ENCODE measurements at regions of chr2 and their contacts with region 1.

Region 1: DNA sequence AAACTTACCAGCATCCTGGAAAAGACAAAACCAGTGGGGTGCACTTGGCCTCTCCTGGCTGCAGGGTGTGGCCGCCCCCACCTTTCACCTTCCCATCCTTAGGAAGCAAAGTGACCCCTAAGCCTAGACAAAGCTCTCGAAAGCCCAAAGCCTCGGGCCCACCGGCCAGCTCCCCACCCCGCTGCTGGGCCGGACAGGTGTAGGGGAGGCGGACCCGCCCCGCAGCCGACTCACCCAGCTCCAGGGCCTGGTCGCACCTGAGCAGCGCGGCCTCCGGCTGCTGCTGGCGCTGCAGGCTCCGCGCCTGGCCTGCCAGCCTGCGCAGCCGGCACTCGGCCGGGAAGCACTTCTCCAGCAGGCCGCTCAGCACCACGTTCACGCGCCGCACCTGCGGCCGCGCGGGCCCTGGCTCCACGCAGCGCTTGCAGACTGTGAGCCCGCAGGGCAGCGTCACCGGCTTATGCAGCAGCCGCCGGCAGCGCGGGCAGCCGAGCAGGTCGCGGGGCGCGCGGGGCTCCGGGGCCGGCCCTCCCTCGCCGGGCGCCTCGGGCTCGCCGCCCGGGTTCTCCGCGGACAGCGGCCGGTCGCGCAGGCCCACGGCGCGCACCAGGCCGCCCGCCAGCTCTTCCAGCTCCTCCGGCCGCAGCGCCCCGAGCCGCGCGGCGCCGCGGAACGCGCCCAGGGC is 978 bp downstream of the LONRF2 start:
- DNase-seq: peak in 39 of 42 donors; percentile 12 to 70 (median 42)

Region 2: DNA sequence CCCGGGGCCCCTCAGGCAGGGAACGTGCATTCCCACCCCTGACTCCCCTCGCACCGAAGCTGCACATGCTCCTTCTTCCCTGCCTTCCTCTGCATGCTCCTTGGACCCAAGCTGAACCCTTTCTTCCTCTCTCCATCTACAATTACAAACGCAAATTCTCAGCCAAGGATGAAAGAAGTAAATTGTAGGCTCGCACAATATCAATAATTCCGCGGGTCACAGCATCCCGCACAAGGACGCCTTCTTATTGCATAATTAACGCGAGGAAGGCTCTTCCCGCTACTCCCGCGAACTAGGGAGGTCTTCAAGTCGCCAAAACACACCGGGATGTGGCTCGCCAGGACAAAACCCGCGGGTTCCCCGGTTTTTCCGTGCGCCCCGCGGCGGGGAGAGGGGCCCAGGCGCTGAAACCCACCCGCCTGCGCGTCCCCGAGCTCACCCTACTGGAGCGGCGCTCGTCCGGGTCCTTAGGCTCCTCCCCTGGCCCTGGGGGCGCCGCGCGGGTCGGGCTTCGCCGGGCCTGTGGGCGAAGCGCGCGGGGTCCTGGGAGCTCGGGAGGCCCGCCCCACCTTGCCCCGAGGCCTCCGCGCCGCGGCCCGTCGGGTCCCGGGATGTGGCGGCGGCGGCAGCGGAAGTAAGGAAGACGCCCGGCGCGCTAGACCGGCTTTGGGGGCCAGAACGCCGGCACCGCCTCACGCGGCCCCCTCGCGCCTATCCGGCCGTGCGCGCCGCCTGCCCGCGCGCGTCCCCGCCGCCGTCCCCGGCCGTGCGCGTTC is 95.8 kb after region 1 on chr2 and contains the start of gene CHST10:
- intact Hi-C with region 1: loop called (anchors 10 kb)
- DNase-seq: peak in 41 of 42 donors; percentile 39 to 86 (median 73)

Measured in head of caudate nucleus (tissue), 42 donors.